Activated naive CD4-positive, alpha-beta T cell treated with anti-CD3 and anti-CD28 coated beads for 36 hours (primary cell): ENCODE measurements at regions of chr1 and their contacts with region 1.

Region 1: DNA sequence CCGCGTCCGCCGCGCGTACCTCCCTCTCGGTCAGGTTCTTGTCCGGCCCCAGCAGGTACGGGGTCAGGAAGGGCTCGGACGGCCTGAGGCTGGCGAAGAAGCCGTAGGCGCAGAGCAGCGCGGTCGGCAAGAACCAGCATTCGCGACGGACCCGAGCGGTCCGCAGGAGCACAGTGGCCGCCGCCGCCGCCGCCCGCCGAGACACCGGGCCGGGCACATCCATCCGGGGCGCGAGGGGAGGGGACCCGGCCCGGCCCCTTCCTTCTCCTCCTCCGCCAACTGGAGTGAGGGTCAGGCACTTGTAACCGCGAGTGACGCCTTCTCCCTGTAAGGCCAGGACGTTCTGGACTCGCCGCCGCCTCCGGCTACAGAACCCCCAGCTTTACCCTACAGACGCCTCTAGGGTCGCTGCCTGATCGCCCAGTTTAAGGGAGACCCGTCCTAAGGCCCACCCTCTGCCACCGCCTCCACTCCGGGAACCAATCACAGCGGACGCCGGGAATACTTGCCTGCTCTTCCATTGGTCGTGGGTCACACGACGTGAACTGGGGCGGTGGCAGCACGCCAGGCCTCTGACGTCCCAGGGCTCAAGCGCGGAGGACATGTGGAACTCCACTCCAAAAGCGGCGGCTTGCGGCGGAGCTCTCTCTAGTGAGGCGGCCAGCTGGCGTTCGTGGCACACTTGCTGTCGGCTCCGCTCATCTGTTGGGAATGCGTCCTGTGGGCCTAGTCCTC is at the start of gene SLC19A2:
- DNase-seq: peak; percentile 96
- H3K4me3 Mint-ChIP-seq: peak within 1 kb of the TSS; percentile 89
- H3K27ac Mint-ChIP-seq: peak within 1 kb of the TSS; percentile 80
- H3K4me1 Mint-ChIP-seq: peaks cover 48% of the 10 kb centered on the region
- H3K27me3 Mint-ChIP-seq: no peaks in the 10 kb centered on the region
- total RNA-seq, gene SLC19A2: 3.2 to 3.6 TPM

Region 2: GRCh38 chr1:168178638-168179437 is 1306.9 kb before region 1 on chr1 and contains the start of gene TIPRL:
- CTCF ChIA-PET with region 1: no interaction called
- intact Hi-C with region 1: loop called (anchors 5 kb)
- DNase-seq: peak; percentile 97
- H3K4me3 Mint-ChIP-seq: no peak within 1 kb of the TSS
- H3K27ac Mint-ChIP-seq: no peak within 1 kb of the TSS
- H3K4me1 Mint-ChIP-seq: peaks cover 7% of the 10 kb centered on the region
- H3K27me3 Mint-ChIP-seq: peaks cover 2% of the 10 kb centered on the region
- total RNA-seq, gene TIPRL: 76.7 to 81.3 TPM

Region 3: DNA sequence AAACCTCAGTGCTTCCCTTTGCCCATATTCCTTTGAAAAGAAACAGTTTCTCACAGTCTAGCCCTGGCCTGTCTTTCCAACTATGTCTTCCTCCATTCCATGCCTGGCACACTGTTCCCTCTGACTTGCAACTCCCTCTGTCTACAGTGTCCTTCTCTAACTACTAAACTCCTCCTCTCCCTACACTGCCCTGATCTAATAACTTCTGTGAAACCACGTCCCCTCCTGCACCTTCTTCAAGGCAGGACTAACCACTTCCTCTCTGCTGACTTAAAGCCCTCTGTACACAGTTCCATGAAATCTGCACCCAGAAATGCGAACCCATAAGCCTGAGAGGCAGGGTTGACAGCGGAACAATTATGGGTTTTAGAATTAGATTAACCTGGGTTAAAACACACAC is 441.4 kb before region 1 on chr1:
- CTCF ChIA-PET with region 1: no interaction called
- intact Hi-C with region 1: loop called (anchors 5 kb)
- DNase-seq: peak; percentile 68
- H3K4me3 Mint-ChIP-seq: no peak overlapping the region
- H3K27ac Mint-ChIP-seq: peak overlapping the region; percentile 66
- H3K4me1 Mint-ChIP-seq: peaks cover 63% of the 10 kb centered on the region
- H3K27me3 Mint-ChIP-seq: no peaks in the 10 kb centered on the region

Region 4: DNA sequence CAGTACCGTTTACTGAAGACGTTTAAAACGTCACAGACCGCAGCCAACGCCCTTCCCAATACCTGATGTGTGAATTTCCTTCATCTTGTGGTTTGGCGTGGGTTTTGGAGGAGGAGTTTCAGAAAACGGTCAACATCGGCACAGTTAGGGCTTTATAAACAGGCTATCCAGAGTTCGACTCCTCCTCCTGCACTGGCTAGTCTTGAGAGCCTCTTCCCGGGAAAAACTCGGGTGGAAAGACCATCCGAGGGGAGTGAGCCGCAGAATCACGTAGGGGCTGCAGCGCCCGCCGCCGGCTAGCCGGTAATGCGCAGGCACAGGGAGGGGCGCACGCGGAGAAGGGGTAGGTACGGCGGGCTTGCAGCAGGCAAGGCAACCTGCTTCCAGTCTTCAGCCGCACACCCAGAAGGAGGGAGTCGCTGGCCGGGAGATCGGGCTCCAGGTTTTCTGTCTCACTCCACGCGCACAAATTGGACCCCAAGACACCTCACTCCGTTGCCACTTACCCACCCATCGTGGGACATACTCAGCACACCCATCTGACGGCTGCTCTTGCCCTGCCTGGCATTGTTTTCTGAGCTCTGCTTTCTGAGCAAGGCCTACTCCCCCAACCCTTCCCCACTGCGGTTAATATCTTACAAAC is 25.4 kb before region 1 on chr1:
- CTCF ChIA-PET with region 1: no interaction called
- intact Hi-C with region 1: loop called (anchors 1 kb)
- DNase-seq: peak; percentile 24
- H3K4me3 Mint-ChIP-seq: peak overlapping the region; percentile 49
- H3K27ac Mint-ChIP-seq: no peak overlapping the region
- H3K4me1 Mint-ChIP-seq: peaks cover 25% of the 10 kb centered on the region
- H3K27me3 Mint-ChIP-seq: peaks cover 11% of the 10 kb centered on the region

Region 5: GRCh38 chr1:169538998-169539871 is 53.5 kb after region 1 on chr1:
- CTCF ChIA-PET with region 1: no interaction called
- intact Hi-C with region 1: no loop called
- DNase-seq: no peak
- H3K4me3 Mint-ChIP-seq: no peak overlapping the region
- H3K27ac Mint-ChIP-seq: no peak overlapping the region
- H3K4me1 Mint-ChIP-seq: no peaks in the 10 kb centered on the region
- H3K27me3 Mint-ChIP-seq: no peaks in the 10 kb centered on the region

Region 6: DNA sequence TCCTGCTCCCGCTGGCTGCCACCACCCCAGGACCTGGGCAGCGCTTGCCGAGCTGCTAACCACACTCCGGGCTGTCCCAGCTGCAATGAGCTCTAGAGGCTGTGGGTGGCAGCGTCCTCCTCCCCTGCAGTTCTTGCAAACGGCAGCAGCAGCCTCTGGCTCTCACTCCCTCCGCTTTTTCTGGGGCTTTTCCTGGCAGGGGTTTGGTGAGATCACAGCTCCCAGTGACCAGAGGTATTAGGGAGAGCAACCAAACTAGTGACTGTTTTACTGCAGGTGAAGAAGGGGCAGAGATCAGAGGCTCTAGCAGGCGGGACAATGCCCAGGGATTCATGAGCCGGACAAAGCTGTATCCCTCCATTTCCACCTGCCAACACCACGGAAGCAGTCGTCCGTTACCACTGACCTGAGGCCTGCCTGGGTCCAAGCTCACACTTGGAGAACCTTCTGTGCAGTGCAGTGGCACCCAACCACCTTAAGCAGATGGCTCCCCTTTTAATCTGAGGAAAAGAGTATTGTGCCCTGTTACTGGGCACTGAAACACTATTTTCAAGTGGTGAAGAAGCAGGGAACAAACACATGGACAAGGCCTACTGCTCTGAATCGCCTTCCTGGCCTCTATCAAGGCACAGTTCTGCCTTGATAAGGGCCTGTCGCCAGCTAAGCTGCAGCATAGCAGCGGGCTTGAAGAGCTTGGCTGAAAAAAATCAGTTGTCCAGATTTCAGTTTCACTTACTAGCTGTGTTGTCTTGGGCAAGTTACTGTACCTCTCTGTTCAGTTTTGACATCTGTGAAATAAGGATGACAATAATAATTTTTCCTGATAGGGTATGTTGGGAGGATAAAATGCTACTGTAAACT is 100.9 kb after region 1 on chr1 and contains the start of gene F5:
- CTCF ChIA-PET with region 1: no interaction called
- intact Hi-C with region 1: loop called (anchors 1 kb)
- DNase-seq: peak; percentile 94
- H3K4me3 Mint-ChIP-seq: peak within 1 kb of the TSS; percentile 94
- H3K27ac Mint-ChIP-seq: peak within 1 kb of the TSS; percentile 97
- H3K4me1 Mint-ChIP-seq: peaks cover 60% of the 10 kb centered on the region
- H3K27me3 Mint-ChIP-seq: no peaks in the 10 kb centered on the region
- total RNA-seq, gene F5: 58.6 to 59.1 TPM

Region 7: DNA sequence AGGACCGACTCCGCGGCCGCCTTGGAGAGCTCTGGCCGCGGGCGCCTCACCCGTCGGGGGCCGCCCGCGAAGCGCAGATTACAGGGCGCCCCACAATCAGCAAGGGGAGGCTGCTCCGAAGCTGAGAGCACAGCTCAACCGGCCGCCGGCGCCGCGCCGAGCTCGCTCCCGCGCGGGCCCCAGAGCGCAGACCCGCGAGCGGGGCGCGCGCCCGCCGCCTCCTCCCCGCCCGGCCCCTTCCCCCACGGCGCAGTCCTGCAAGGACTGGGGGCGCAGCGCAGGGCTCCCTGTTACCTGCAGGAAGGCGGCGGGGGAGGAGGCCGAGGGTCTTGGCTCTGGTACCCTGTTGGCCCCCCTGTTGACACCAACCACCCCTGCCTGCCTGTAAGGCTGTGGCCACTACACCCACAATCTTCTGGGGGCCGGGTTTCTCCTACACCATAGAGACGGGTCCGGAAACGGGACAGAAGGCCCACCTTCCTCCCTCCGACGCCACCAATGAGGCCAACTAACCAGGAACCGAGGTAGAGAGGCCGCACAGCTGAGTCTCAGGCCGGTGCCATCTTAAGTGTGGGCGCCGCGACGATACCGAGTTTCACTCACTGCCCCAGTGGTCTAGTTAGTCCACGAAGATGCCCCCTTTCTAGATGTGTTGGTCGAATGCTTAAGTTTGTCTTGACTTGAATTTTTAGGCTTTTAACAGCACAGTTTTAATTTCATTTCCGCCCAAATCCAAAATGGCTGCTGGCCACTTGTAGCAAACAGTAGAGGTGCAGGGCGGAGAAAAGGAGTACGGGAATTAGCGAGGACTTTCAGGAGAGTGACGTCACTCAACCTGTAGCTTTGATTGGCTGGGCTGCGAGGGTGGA is 408.0 kb after region 1 on chr1 and contains the start of gene SCYL3:
- CTCF ChIA-PET with region 1: no interaction called
- intact Hi-C with region 1: loop called (anchors 1 kb)
- DNase-seq: peak; percentile 94
- H3K4me3 Mint-ChIP-seq: peak within 1 kb of the TSS; percentile 87
- H3K27ac Mint-ChIP-seq: peak within 1 kb of the TSS; percentile 100
- H3K4me1 Mint-ChIP-seq: peaks cover 34% of the 10 kb centered on the region
- H3K27me3 Mint-ChIP-seq: no peaks in the 10 kb centered on the region
- total RNA-seq, gene SCYL3: 8.8 TPM